HEK293 (cell line): ENCODE measurements at regions of chr16 and their contacts with region 1.

Region 1: GRCh38 chr16:78437352-78437968 is 338.0 kb downstream of the WWOX start:
- H3K4me3 ChIP-seq: no peak overlapping the region
- H3K27ac ChIP-seq: no peak overlapping the region
- H3K4me1 ChIP-seq: no peaks in the 10 kb centered on the region
- CTCF ChIP-seq: peak; percentile 38; the same call in 1 of the 2 replicates

Region 2: DNA sequence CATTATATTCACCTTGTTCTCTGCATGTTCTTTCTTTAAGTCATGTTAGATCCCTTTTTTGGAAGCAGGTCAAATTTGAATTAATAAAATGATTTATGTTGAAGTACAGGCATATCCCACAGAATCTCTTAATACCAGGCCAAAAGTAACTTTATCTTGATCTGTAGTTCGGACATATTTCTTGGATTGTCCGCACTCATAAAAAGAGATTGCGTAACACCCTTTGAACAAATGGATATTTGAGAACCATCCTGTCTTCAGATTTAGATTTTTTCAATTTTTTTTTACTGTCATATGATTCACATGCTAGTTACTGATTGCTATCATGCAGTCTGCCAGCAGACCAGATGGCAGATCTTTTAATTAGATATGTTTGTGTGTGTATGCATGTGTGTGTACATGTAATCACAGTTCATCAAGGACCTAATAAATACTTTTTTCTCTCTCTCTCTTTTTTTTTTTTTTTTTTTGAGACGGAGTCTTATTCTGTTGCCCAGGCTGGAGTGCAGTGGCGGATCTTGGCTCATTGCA is 14.6 kb after region 1 on chr16:
- CTCF ChIA-PET with region 1: interaction called, 37 read pairs
- POLR2A ChIA-PET with region 1: no interaction called
- H3K4me3 ChIP-seq: no peak overlapping the region
- H3K27ac ChIP-seq: no peak overlapping the region
- H3K4me1 ChIP-seq: no peaks in the 10 kb centered on the region
- CTCF ChIP-seq: no peak

Region 3: DNA sequence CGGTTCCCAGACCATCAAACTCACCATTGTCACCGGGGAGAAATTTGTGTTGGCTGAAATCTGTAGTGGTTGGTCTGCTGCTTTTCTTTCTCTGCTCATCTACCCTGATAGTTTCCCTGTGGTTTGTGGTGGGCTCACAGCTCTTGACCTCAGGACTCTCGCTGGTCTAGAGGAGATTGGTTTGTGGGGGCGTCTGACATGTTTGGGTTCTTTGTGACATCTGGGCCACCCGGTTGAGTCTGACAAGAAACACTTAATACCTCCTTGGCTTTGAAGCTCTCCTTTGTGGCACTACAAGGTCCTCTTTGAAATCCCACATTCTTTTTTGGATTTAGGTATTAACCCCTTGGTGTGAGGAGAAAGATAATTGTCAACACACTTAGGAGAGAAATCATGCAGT is 324.0 kb after region 1 on chr16:
- CTCF ChIA-PET with region 1: no interaction called
- POLR2A ChIA-PET with region 1: no interaction called
- H3K4me3 ChIP-seq: no peak overlapping the region
- H3K27ac ChIP-seq: no peak overlapping the region
- H3K4me1 ChIP-seq: no peaks in the 10 kb centered on the region
- CTCF ChIP-seq: no peak